ENCODE measurements at regions of chr2 and their contacts with region 1.

Region 1: DNA sequence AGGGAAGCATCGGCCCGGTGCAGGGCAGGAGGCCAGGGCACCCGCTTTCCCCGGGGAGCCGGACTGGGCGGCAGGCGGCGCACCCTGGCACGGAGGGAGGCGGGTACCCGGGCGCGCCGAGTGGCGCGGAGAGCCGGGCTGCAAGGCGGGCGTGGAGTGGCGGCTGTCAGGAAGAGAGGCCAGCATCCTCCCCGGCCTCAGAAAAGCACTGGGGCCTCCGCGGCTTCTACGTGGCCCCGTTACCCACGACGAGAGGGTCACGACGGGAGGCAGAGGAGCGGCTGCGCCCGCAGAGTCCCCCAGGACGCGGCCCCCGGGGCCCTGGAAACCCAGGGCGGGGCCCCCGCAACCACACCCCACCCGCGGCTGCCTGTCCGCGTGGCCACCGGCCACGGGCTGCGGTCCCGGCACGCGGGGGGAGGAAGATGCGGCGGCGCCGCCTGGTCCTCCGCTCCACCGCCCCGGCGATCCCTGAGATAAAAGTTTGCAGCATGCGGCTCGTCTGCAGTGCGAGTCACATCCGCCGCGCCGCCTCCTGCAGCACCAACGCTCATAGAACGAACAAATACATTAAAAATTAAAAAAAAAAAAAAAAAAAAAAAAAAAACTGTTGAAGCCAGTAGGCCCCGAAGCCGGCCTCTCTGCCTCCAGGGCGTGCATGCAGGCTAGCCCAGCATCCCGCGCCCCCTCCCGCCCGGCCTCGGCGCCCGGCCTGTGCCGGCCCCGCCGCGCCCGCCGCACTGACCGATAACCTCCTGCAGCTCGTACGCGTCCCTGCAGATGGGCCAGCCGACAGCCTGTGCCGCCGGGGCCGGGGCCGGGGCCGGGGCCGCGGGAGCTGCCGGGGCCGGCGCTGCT is 683 bp downstream of the STK39 start:
- DNase-seq: peak; percentile 52 to 80
- ATAC-seq: peak; percentile 57 to 89 (median 76)
- H3K4me3 ChIP-seq: peak overlapping the region; percentile 53 to 90 (median 82)
- H3K27ac ChIP-seq: peak overlapping the region; percentile 37 to 94 (median 88)
- H3K4me1 ChIP-seq: peaks cover 0 to 48% (median 36%) of the 10 kb centered on the region in 9 donors
- H3K27me3 ChIP-seq: peaks cover 0 to 6% (median 0%) of the 10 kb centered on the region in 7 donors
- CTCF ChIP-seq: peak in 6 of 9 donors; percentile 19 to 57 (median 52)

Region 2: GRCh38 chr2:168130346-168130745 is 116.4 kb before region 1 on chr2:
- intact Hi-C with region 1: loop called in 6 of 10 experiments (anchors 5 to 10 kb)
- DNase-seq: no peak
- ATAC-seq: peak; percentile 77 to 97 (median 88)
- H3K4me3 ChIP-seq: no peak overlapping the region
- H3K27ac ChIP-seq: peak overlapping the region in 9 of 10 donors; percentile 6 to 67 (median 42)
- H3K4me1 ChIP-seq: peaks cover 0 to 38% (median 20%) of the 10 kb centered on the region in 9 donors
- H3K27me3 ChIP-seq: no peaks in the 10 kb centered on the region
- CTCF ChIP-seq: no peak

Region 3: DNA sequence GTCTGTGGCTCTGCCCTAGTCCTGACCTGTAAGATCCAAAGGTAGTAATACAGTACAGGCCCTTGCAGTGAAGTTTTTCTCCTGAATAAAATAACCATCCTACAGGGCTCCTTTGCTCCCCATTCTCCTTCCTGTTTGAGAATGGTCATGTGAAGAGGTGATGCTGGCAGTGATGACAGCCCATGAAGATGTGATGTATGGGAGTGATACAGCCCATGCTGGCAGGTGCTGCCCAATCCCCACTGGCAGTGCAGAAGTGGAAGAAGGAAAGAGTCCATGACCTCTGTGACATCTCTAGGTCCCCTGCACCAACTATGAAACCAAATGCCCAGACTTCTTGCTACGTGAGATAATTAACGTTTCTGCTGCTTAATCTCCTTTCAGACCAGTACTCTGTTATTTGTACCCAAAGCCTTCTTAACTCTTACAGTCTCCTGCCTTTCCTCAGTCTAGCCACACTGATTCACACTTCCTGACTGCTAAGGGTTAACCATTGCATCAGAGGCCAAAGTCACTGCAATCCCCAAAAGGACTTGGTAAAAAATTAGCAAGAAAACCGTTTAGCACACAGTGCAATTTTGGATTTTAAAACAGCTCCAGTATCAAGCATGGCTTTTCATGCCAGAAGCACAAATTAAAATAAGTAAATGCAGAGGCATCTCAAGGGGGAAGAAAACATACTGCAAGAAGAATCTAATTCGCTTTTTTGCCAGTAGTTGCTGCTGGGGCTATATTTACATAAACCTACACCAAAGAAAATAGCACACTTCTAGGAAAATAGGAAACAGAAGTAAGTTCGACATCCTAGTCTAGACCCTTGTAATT is 97.3 kb before region 1 on chr2:
- intact Hi-C with region 1: loop called in 3 of 10 experiments (anchors 5 to 10 kb)
- DNase-seq: no peak
- ATAC-seq: peak in 2 of 8 donors; percentile 18
- H3K4me3 ChIP-seq: no peak overlapping the region
- H3K27ac ChIP-seq: no peak overlapping the region
- H3K4me1 ChIP-seq: peaks cover 2 to 72% (median 59%) of the 10 kb centered on the region in 9 donors
- H3K27me3 ChIP-seq: no peaks in the 10 kb centered on the region
- CTCF ChIP-seq: no peak

Region 4: GRCh38 chr2:168976034-168976654 is 729.4 kb after region 1 on chr2:
- intact Hi-C with region 1: no loop called
- DNase-seq: no peak
- ATAC-seq: peak in 4 of 8 donors; percentile 53 to 91 (median 62)
- H3K4me3 ChIP-seq: no peak overlapping the region
- H3K27ac ChIP-seq: no peak overlapping the region
- H3K4me1 ChIP-seq: peaks cover 0 to 11% (median 0%) of the 10 kb centered on the region in 9 donors
- H3K27me3 ChIP-seq: no peaks in the 10 kb centered on the region
- CTCF ChIP-seq: no peak